Kidney (tissue), 22 donors: ENCODE measurements at regions of chr6 and their contacts with region 1.

Region 1: GRCh38 chr6:37483917-37484785 is 15.5 kb downstream of the CCDC167 start:
- DNase-seq: peak in 4 of 5 donors; percentile 52 to 87 (median 79)
- H3K4me3 ChIP-seq: no peak overlapping the region
- H3K27ac ChIP-seq: no peak overlapping the region
- H3K4me1 ChIP-seq: no peaks in the 10 kb centered on the region
- H3K27me3 ChIP-seq: no peaks in the 10 kb centered on the region
- CTCF ChIP-seq: peak; percentile 88

Region 2: GRCh38 chr6:36827261-36828079 is 656.7 kb before region 1 on chr6:
- intact Hi-C with region 1: no loop called
- DNase-seq: peak in 2 of 5 donors; percentile 77 to 79
- H3K4me3 ChIP-seq: no peak overlapping the region
- H3K27ac ChIP-seq: peak overlapping the region; percentile 71 to 78
- H3K4me1 ChIP-seq: peaks cover 0 to 34% (median 28%) of the 10 kb centered on the region in 3 donors
- H3K27me3 ChIP-seq: no peaks in the 10 kb centered on the region
- CTCF ChIP-seq: no peak

Region 3: DNA sequence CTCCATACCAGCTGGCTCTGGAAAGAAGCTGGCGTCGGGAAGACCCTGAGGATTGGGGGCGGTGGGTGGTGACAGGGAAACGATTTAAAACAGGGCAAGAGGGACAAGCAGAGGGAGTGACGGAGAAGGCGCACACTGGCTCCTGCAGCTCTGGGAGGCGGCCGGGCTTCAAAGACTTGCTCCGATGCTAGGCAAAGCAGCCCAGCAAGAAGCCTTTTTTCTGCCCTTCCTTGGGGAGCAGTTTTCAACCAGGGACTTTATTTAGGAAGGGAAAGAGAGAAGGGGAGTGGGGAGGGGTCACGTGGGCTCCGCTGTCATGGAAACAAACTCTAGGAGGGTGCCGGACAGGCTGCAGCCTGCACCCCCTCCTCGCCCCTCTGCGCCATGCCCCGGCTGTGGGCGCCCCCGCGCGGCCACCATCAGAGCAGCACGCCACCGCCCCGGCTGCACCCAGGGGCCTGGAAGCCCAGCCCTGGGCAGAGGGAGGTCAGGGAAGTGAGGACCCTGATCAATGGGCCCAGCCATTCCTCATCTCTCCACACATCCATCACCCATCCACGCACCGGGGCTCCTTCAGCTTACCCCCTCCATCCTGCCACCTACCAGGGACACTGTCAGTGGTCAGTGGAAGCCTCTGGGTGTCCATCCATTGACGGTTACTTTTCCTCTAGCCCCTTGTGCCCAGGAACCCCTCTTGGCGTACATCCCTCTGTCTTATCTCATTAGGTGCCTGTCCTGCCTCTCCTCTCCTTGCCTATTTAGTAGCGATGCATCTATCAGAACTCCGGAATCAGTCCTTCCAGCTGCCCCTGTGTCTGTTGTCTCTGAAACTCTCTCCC is 82.2 kb after region 1 on chr6:
- intact Hi-C with region 1: loop called (anchors 10 kb)
- DNase-seq: peak; percentile 62 to 78 (median 75)
- H3K4me3 ChIP-seq: peak overlapping the region in 1 of 3 donors; percentile 24
- H3K27ac ChIP-seq: no peak overlapping the region
- H3K4me1 ChIP-seq: peaks cover 0 to 2% (median 0%) of the 10 kb centered on the region in 3 donors
- H3K27me3 ChIP-seq: no peaks in the 10 kb centered on the region
- CTCF ChIP-seq: peak; percentile 76

Region 4: DNA sequence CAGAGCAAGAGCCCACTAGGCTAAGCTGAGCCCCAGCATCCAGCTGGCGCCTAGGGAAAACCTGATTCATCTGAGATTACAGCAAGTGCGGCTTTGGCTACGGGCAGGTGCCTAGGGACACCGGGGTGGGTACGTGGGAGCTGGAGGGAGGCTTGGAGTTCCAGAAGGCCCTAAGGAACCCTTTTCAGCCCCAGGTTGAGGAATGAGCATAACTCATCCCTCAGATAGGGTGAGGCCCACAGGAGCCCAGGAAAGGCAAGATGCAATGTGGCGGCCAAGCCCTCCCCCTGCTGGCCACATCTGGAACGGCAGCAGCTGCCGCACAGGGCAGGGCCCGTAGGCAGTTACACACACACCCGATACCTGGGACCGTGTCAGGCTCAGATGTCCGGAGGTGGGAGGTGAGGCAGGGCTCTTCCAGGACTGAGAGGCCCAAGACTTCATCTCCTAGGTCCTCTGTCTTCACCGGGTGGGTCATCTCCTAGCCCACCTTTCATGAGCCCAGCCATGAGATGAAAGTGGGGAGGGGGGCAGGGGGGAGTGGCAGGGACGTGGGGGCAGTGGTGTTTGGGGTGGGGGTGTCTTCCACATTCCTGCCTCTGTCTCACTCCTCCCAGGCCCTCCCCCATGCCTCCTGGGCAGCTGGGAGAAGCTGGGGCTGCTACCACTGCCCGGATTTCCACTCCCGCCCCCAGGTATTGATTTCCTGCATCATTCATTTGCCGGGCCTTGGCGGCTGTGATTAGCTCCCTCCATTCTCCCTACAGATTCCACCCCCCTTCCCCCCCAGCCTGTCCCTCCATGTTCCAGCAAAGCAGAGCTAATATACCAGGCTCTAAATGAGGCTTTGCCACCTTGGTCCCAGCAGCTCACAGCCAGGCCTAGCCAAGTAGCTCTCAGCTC is 208.0 kb after region 1 on chr6:
- intact Hi-C with region 1: loop called (anchors 10 kb)
- DNase-seq: peak; percentile 86 to 92 (median 86)
- H3K4me3 ChIP-seq: no peak overlapping the region
- H3K27ac ChIP-seq: no peak overlapping the region
- H3K4me1 ChIP-seq: peaks cover 0 to 11% (median 5%) of the 10 kb centered on the region in 3 donors
- H3K27me3 ChIP-seq: peaks cover 19% of the 10 kb centered on the region
- CTCF ChIP-seq: peak; percentile 98